OCI-LY7 (cell line): ENCODE measurements at regions of chr11 and their contacts with region 1.

Region 1: DNA sequence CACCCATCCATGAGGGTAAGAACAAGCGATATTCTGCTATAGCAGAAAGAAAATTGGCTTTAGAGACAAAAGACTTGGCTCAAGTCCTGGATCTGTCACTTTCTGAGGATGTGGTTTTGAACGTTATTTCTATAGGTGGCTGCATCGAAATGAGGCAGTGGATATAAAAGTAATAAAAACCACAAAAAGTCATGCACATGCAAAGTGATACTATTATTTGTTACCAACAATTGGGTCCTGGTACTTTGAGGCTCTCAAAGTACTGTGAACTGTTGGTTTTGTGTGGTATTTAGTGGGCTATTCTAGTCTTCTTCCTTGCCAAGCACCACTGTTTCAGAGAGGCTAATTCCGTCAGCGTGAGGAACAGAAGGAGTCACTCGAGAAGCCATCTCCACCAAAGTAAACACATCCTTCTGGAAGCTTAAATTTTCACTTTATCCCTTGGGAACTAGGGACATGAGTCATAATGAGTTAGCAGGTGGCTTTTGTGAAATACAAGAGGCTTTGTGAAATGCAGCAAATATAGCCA is 13.1 kb downstream of the UBASH3B start:
- DNase-seq: peak; percentile 87
- H3K4me3 ChIP-seq: peak overlapping the region; percentile 47
- H3K27ac ChIP-seq: peak overlapping the region; percentile 93
- H3K4me1 ChIP-seq: peaks cover 99% of the 10 kb centered on the region
- CTCF ChIP-seq: no peak

Region 2: DNA sequence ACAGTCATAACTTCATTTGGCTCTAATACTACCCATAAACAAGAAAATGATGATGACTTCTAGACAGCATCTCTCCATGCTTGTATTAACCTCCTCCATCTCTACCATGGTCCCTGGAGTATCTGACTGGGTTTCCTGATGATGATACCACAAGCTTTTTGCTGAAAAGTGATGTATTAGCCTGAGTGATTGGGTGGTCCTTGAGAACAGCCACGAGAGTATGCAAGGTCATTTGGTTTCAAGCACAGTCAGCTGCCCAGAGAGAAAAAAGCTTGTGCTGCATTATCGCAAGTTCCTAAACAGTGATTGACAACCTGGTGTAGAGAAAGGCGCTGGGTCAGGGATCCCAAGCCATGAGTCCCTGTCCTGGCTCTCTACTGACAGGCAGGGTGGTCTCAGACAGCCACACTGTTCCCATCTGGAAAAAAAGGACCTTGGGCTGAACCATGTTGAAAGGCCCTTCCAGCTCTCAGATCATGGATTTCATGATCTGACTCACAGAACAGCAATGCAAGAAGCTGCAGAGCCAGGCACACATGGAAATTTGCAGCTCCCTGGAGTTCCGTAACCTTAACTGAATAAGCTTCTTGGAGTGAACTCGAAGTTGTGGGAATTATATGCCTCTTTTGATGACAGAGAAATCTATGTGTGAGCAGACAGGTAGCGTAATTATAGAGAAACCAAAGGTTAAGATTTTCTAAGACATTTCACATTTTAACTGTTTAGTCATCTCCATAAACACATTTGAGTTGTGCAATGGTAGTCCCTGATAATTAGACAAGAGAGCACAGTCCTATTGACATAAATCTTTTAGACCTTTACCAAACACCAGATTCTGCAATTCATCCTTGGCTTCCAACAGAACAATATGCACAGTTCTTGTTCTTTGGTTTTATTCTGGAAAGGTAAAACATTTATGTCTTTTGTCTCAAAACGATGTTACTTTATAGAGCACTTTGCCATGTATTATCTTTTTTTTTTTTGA is 67.2 kb before region 1 on chr11:
- CTCF ChIA-PET with region 1: no interaction called
- POLR2A ChIA-PET with region 1: no interaction called
- intact Hi-C with region 1: no loop called
- DNase-seq: no peak
- H3K4me3 ChIP-seq: no peak overlapping the region
- H3K27ac ChIP-seq: no peak overlapping the region
- H3K4me1 ChIP-seq: no peaks in the 10 kb centered on the region
- CTCF ChIP-seq: no peak

Region 3: GRCh38 chr11:122655527-122656072 is 13.0 kb before region 1 on chr11 and contains the start of gene UBASH3B:
- CTCF ChIA-PET with region 1: interaction called, 7 read pairs
- POLR2A ChIA-PET with region 1: interaction called, 58 read pairs
- intact Hi-C with region 1: no loop called
- DNase-seq: peak; percentile 80
- H3K4me3 ChIP-seq: peak within 1 kb of the TSS; percentile 77
- H3K27ac ChIP-seq: peak within 1 kb of the TSS; percentile 43
- H3K4me1 ChIP-seq: peaks cover 46% of the 10 kb centered on the region
- CTCF ChIP-seq: no peak; the same call in 1 of the 2 replicates
- total RNA-seq, gene UBASH3B: 36.3 and 54.7 TPM in 2 replicates

Region 4: GRCh38 chr11:122690801-122691548 is 22.3 kb after region 1 on chr11:
- CTCF ChIA-PET with region 1: interaction called, 4 read pairs
- POLR2A ChIA-PET with region 1: interaction called, 175 read pairs
- intact Hi-C with region 1: loop called (anchors 1 kb)
- DNase-seq: peak; percentile 75
- H3K4me3 ChIP-seq: peak overlapping the region; percentile 7
- H3K27ac ChIP-seq: peak overlapping the region; percentile 99
- H3K4me1 ChIP-seq: peaks cover 87% of the 10 kb centered on the region
- CTCF ChIP-seq: no peak

Region 5: GRCh38 chr11:122717264-122717867 is 48.7 kb after region 1 on chr11:
- CTCF ChIA-PET with region 1: no interaction called
- POLR2A ChIA-PET with region 1: interaction called, 12 read pairs
- intact Hi-C with region 1: no loop called
- DNase-seq: peak; percentile 90
- H3K4me3 ChIP-seq: peak overlapping the region; percentile 47
- H3K27ac ChIP-seq: peak overlapping the region; percentile 92
- H3K4me1 ChIP-seq: peaks cover 95% of the 10 kb centered on the region
- CTCF ChIP-seq: no peak

Region 6: GRCh38 chr11:122743949-122744348 is 75.3 kb after region 1 on chr11:
- CTCF ChIA-PET with region 1: interaction called, 4 read pairs
- POLR2A ChIA-PET with region 1: interaction called, 56 read pairs
- intact Hi-C with region 1: loop called (anchors 2 kb)
- DNase-seq: peak; percentile 92
- H3K4me3 ChIP-seq: peak overlapping the region; percentile 53
- H3K27ac ChIP-seq: peak overlapping the region; percentile 85
- H3K4me1 ChIP-seq: peaks cover 89% of the 10 kb centered on the region
- CTCF ChIP-seq: no peak

Region 7: GRCh38 chr11:122749005-122749687 is 80.5 kb after region 1 on chr11:
- CTCF ChIA-PET with region 1: interaction called, 4 read pairs
- POLR2A ChIA-PET with region 1: interaction called, 56 read pairs
- intact Hi-C with region 1: loop called (anchors 2 kb)
- DNase-seq: peak; percentile 70
- H3K4me3 ChIP-seq: peak overlapping the region; percentile 4
- H3K27ac ChIP-seq: no peak overlapping the region
- H3K4me1 ChIP-seq: peaks cover 95% of the 10 kb centered on the region
- CTCF ChIP-seq: no peak